Right ventricle myocardium inferior (tissue), 1 donor: ENCODE measurements at regions of chr22 and their contacts with region 1.

Region 1: GRCh38 chr22:48531761-48532435 is 1295.8 kb downstream of the BRD1 start:
- DNase-seq: no peak
- ATAC-seq: no peak

Region 2: DNA sequence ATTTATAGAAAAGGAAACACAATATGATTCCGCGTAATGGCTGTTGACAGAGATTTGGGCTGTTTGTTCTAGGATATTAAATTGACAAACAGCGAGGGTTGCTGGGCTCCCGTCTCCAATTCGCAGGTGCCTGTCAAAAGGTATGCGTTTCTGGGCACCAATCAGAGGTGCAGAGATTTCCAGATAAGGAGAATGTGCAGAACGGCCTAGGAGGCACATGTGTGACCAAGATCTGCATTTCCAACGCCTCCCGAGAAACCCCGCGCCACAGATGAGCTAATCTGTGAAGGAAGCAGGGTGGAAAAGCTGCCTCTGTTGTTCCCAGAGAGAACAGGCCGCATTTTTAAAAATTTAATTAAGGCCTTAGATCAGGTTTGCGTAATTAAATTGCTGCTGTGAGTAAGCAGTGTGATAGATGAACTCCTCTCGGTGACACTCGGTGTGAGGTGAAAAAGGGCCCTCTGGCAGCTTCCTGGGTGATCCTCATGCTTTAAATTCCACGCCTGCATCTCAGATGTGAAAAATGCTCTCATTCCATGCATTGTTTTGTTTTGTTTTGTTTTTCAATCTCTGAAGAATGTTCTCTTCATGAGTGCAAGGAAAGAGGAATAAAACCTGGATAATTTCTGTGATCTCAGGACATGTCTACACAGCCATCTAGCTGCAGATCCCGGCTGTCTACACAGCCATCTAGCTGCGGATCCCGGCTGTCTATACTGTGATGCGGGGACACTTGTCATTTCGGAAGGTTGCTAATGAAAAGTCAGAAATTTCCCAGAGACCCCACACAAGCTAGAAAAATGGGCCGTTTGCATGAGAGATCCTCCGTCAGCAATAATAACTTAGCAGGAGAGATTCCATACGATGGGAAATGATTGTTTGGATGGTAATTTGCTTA is 103.2 kb before region 1 on chr22:
- intact Hi-C with region 1: no loop called
- DNase-seq: no peak
- ATAC-seq: no peak

Region 3: DNA sequence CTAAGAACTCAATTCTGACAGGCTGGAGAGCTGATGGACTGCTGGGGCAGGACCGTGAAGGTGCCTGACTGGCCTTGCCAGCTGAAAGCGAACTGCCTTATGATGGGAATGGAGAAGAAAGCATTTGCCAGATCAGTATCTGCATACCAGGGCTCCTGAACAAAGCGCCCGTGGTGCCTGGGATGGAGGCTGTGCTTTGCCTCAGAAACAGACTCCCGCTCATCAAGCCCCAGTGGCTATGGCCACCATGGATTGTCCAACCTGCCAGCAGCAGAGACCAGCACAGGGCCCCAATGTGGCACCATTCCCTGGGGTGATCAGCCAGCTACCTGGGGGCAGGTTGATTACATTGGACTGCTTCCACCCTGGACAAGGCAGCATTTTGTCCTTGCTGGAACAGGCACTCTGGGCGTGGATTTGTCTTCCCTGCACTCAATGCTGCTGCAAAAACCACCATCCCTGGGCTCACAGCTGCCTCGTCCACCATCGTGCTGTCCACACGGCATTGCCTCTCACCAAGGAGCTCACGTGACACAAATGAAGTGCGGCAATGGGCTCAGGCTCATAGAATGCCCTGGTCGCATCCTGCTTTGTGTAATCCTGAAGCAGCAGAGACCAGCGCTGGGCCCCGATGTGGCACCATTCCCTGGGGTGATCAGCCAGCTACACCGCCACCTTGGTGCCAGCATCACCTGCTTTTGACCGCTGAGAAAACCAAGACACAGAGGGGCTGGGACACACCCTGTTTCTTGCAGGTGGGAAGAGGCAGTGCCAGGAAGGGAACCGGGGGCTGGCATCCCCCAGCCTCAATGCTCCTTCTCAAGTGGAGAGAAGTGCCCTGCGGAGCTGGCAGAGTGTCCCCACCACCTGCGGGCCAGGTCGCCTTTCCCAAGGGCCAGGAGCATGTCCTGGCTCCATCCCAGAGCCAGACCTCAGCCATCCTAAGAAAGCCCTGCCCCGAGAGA is 71.8 kb before region 1 on chr22:
- intact Hi-C with region 1: no loop called
- DNase-seq: no peak
- ATAC-seq: no peak

Region 4: DNA sequence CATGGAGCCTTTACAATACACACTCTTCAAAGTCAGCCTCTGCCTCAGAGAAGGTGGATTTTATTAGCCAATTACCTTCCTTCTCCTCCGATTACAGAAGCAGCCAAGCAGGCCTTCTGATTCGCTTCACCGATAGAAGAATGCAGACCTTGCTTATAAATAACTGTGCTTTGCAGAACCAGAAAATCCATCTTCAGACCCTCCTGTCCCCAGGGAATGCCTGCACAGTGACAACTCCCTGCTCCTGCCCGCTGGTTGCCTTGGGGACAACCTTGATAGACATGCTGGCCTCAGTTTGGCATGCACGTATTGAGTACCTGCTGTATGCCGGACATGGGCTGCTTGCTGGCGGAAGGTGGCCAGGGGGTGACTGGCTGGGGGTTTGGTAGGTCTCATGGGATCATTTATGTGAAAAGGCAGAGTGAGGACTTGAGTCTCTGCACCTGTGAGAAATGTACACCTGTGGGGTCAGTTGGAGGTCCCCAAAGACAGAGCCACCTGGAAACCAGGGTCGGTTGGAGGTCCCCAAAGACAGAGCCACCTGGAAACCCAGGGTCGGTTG is 57.1 kb after region 1 on chr22:
- intact Hi-C with region 1: loop called (anchors 2 kb)
- DNase-seq: peak; percentile 49
- ATAC-seq: no peak